ENCODE measurements at regions of chr9 and their contacts with region 1.

Region 1: DNA sequence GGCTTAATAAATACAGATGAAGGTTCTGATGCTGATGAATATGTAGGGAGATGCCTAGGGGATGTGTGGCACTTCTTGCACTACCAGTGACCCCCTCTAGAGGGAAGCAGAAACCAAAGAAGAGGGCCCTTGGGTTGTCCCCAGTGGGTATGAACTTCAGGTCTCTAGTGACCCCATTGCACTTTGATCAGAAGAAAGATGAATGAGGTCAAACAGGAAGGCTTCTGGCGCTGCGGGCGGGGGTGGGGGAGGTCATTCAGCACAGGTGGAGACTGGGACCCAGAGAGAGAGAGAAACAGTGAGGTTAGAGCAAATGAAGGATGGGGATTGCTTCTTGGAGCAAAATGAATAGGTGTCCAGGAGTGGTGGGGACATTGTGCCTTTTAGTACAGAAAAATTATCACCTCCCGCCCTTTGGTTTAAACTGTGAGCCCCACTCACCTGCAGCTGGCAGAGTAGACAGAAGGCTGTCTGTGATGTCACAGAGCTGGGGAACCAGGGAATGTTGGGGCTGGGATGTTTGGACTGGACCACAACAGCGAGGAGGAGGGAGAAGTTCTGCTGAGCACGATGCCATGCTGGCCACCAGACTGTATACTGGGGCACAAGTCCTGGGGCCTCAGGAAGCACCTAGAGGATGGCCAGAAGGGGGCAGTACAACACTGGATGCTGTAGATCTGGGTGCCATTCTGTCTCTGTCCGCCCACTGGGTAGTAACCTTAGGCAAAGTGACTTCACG is at the start of gene TEX48:
- DNase-seq: peak; percentile 63
- H3K4me3 Mint-ChIP-seq: no peak within 1 kb of the TSS
- H3K27ac Mint-ChIP-seq: peak within 1 kb of the TSS; percentile 48
- H3K4me1 Mint-ChIP-seq: peaks cover 35% of the 10 kb centered on the region
- H3K27me3 Mint-ChIP-seq: no peaks in the 10 kb centered on the region
- CTCF ChIP-seq: peak; percentile 66
- total RNA-seq, gene TEX48: not detected in 2 replicates

Region 2: GRCh38 chr9:114718801-114719221 is 37.0 kb after region 1 on chr9:
- CTCF ChIA-PET with region 1: interaction called, 3 read pairs
- intact Hi-C with region 1: loop called (anchors 2 kb)
- DNase-seq: peak; percentile 79
- H3K4me3 Mint-ChIP-seq: peak overlapping the region; percentile 7
- H3K27ac Mint-ChIP-seq: peak overlapping the region; percentile 73
- H3K4me1 Mint-ChIP-seq: peaks cover 30% of the 10 kb centered on the region
- H3K27me3 Mint-ChIP-seq: peaks cover 13% of the 10 kb centered on the region
- CTCF ChIP-seq: no peak

Region 3: DNA sequence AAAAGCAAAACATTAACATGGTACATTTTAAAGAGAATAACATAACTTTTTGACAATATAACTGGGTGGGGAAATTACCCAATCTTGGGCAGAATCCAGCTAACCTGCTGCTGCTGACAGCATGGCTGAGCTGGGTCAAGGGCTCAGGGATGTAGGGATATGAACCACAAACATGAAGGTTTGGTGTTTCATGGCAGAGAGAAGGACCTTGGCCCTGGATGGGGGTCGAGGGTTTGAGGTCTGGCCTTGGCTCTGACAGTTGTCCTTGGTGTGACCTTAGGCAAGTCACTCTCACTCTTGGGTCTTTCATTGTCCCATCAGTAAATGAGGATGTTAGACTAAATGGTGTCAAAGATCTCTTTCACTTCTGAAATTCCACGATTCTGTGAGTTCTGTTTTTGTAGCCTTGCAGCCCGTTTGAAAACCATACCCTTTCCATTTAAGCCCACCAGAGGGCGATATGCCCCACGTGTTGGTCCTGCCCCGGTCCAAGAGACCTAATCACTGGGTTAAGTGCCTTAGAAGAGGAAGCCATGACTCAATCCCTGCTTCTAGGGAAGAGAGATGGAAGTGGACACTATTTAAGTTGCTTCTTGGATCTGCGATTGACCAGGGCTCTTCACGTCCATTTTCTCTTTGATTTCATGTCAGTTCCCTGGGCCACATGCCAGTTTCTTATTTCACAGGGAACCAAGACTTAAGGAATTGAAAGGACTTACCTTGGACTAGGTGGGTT is 57.0 kb after region 1 on chr9:
- CTCF ChIA-PET with region 1: no interaction called
- intact Hi-C with region 1: loop called (anchors 2 kb)
- DNase-seq: peak; percentile 69
- H3K4me3 Mint-ChIP-seq: no peak overlapping the region
- H3K27ac Mint-ChIP-seq: no peak overlapping the region
- H3K4me1 Mint-ChIP-seq: no peaks in the 10 kb centered on the region
- H3K27me3 Mint-ChIP-seq: no peaks in the 10 kb centered on the region
- CTCF ChIP-seq: peak; percentile 60

Region 4: DNA sequence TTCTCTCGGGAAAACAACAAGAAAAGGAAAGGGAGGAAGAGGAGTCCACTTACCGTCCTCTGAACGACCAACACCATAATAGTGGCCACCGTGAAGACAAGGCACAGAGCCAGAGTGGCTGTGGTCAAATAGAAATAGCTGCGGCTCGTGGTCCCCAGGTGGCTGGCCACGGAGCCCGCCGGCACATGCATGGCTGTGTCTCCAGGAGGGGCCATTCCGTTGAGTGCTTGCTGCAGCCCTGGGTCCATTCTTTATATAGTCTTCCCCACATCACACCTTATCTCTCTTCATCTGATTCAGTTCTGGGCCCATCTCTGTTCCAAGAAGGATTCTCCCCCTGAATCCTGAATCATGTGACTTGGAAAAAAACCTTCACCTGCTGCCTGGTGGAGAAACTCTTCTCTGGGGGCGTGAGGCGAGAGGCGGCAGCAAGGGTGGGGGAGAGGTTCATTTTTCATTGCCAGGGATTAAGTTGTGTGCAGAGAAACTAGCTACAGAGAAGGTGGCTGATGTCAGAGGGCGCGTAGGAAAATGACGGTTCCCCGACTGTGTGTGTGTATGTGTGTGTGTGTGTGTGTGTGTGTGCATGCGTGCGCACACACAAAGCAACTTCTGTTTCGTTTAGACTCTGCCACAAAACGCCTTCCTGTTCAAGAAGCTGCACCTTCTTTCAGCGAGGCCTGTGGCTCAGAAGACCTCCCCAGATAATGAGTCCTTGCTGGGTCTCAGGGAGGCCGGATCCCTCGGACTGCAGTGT is 248.5 kb after region 1 on chr9 and contains the start of gene TNFSF8:
- CTCF ChIA-PET with region 1: no interaction called
- intact Hi-C with region 1: no loop called
- DNase-seq: no peak
- H3K4me3 Mint-ChIP-seq: no peak within 1 kb of the TSS
- H3K27ac Mint-ChIP-seq: no peak within 1 kb of the TSS
- H3K4me1 Mint-ChIP-seq: no peaks in the 10 kb centered on the region
- H3K27me3 Mint-ChIP-seq: peaks cover 80% of the 10 kb centered on the region
- CTCF ChIP-seq: no peak
- total RNA-seq, gene TNFSF8: not detected in 2 replicates